GM12878 (cell line): ENCODE measurements at regions of chr14 and their contacts with region 1.

Region 1: DNA sequence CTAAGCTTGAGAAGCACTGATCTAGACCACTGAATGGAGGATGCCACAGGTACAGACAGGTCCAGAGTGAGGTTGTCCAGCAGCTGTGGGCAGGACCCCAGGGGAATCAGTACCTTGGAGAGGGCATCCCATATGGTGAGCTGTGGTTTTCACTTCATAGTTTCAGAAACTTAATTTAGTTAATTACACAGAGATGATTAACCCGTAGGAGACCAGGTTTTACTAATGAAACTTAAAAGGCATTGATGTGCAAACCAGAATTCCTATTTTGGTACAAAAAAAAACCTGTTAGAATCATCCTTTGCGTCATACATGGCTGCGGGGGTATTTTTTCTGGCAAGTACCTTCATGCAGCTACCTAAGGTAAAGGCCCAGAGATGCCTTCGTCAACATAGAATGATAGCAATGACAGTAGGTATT is 159.3 kb downstream of the DACT1 start:
- DNase-seq: peak; percentile 88
- ATAC-seq: peak; percentile 86
- H3K4me3 ChIP-seq: no peak overlapping the region
- H3K27ac ChIP-seq: no peak overlapping the region
- H3K4me1 ChIP-seq: peaks cover 7% of the 10 kb centered on the region; the same call in 1 of the 2 replicates
- H3K27me3 ChIP-seq: no peaks in the 10 kb centered on the region
- CTCF ChIP-seq: no peak
- EP300 ChIP-seq: peak; percentile 99 to 100
- POLR2A ChIP-seq: no peak
- RAD21 ChIP-seq: no peak

Region 2: DNA sequence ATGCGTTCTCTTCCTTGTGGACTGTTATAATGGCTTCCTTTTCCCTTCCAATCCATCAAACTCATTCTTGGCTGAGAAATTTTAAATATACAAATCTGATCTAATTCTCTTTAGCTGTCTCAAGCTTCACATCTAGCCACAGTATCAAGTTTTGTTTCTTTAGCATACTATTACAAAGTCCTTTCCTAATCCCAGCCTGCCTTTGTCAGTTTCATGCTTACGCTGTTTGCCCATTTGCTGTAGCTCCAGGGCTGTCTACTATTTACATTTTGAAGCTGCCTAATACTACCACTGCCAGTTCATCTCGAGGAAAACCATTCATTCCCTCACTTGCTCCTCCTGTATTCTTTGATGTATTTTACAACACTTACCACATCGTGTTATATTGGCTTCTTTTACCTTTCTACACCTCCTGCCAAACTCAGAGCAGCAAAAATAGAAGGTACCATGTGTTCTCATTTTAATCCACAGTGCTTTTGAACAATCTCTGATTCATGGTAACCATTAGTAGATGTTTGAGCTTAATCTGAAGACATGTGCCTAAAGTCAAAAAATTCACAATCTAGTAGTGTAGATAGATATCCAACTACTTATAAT is 455.8 kb before region 1 on chr14:
- CTCF ChIA-PET with region 1: no interaction called
- POLR2A ChIA-PET with region 1: no interaction called
- RAD21 ChIA-PET with region 1: no interaction called
- SMC1A ChIA-PET with region 1: no interaction called
- in situ Hi-C with region 1: no loop called
- intact Hi-C with region 1: no loop called
- DNase-seq: no peak
- ATAC-seq: no peak
- H3K4me3 ChIP-seq: no peak overlapping the region
- H3K27ac ChIP-seq: no peak overlapping the region
- H3K4me1 ChIP-seq: no peaks in the 10 kb centered on the region
- H3K27me3 ChIP-seq: no peaks in the 10 kb centered on the region
- CTCF ChIP-seq: no peak
- EP300 ChIP-seq: no peak
- POLR2A ChIP-seq: no peak
- RAD21 ChIP-seq: no peak

Region 3: GRCh38 chr14:58637391-58638230 is 159.4 kb before region 1 on chr14 and contains the start of gene DACT1:
- CTCF ChIA-PET with region 1: interaction called, 81 read pairs
- POLR2A ChIA-PET with region 1: interaction called, 8 read pairs
- RAD21 ChIA-PET with region 1: interaction called, 106 read pairs
- SMC1A ChIA-PET with region 1: interaction called, 150 read pairs
- in situ Hi-C with region 1: no loop called
- intact Hi-C with region 1: loop called (anchors 1 kb)
- DNase-seq: no peak
- ATAC-seq: peak; percentile 63
- H3K4me3 ChIP-seq: peak within 1 kb of the TSS; percentile 56; the same call in 1 of the 2 replicates
- H3K27ac ChIP-seq: no peak within 1 kb of the TSS
- H3K4me1 ChIP-seq: peaks cover 9% of the 10 kb centered on the region
- H3K27me3 ChIP-seq: peaks cover 0 to 8% of the 10 kb centered on the region in 2 experiments; a peak in 2 of 4 replicates
- CTCF ChIP-seq: no peak
- EP300 ChIP-seq: no peak
- POLR2A ChIP-seq: peak; percentile 49; the same call in 1 of the 2 replicates
- RAD21 ChIP-seq: no peak
- polyA plus RNA-seq, gene DACT1: 0.16 to 0.27 TPM

Region 4: GRCh38 chr14:58749066-58749669 is 47.9 kb before region 1 on chr14:
- CTCF ChIA-PET with region 1: interaction called, 26 read pairs
- POLR2A ChIA-PET with region 1: interaction called, 6 read pairs
- RAD21 ChIA-PET with region 1: interaction called, 15 read pairs
- SMC1A ChIA-PET with region 1: interaction called, 112 read pairs
- in situ Hi-C with region 1: no loop called
- intact Hi-C with region 1: loop called (anchors 1 kb)
- DNase-seq: peak; percentile 86
- ATAC-seq: peak; percentile 95
- H3K4me3 ChIP-seq: no peak overlapping the region
- H3K27ac ChIP-seq: no peak overlapping the region
- H3K4me1 ChIP-seq: no peaks in the 10 kb centered on the region
- H3K27me3 ChIP-seq: no peaks in the 10 kb centered on the region
- CTCF ChIP-seq: no peak
- EP300 ChIP-seq: peak; percentile 91 to 93
- POLR2A ChIP-seq: no peak
- RAD21 ChIP-seq: no peak

Region 5: DNA sequence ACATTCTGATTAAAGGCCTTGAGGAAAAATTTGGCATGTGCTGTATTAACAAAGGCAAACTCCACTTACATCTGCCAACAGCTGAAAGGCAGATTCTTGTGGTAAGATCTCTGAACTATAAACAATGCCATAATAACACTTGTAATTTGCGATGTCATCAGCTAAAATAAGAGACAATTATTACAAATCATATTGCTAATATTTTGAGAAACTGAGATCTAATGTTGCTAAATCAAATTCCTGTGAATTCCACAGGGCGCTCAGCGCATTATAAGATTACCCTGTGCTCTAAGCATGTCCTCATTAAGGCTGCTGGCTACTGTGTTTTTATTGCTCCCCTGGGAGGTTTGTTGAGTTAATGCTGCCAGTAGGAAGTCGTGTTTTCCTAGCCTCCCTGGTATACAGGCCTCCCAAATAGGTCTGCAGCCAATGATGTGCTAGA is 85.6 kb after region 1 on chr14:
- CTCF ChIA-PET with region 1: no interaction called
- POLR2A ChIA-PET with region 1: interaction called, 3 read pairs
- RAD21 ChIA-PET with region 1: no interaction called
- SMC1A ChIA-PET with region 1: interaction called, 4 read pairs
- in situ Hi-C with region 1: no loop called
- intact Hi-C with region 1: loop called (anchors 5 kb)
- DNase-seq: no peak
- ATAC-seq: no peak
- H3K4me3 ChIP-seq: no peak overlapping the region
- H3K27ac ChIP-seq: no peak overlapping the region
- H3K4me1 ChIP-seq: no peaks in the 10 kb centered on the region
- H3K27me3 ChIP-seq: no peaks in the 10 kb centered on the region
- CTCF ChIP-seq: no peak
- EP300 ChIP-seq: no peak
- POLR2A ChIP-seq: no peak
- RAD21 ChIP-seq: no peak

Region 6: DNA sequence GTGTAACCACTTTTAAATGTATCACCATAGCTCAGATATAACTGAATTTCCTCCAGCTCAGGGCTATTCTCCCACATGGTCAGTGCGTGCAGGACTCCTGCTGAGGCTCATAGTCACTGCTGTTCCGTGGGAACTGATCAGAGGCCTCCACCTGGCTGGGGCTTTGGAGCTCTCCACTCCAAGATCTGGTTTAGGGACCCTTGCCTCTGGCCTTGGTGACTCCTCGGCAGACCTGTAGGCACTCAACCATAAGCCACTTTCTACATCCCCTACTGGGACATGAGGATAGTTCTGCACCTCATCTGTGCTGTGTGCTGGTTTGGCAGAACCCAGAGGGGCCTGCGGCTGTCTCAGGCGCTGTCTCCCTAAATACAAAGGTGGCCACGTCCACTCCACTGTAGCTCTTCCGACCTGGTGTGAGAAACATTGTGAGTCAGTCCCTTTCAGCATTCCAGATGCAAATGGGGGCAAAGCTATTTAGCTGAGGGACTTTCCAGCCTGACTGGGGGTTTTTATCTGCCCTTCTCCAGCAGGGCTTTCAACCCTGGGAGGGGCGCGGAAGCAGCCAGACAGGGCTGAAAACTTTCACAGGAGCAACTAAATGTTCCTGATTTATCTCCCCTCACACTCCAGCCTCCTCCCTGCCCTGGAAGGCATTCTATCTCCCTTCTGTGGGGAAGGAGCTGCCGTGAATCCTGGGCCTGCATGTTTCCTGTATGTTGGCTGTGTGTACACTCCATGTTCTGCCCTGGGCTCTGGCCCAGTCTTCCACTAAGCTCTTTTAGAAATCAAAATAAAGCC is 173.1 kb after region 1 on chr14:
- CTCF ChIA-PET with region 1: interaction called, 9 read pairs
- POLR2A ChIA-PET with region 1: interaction called, 4 read pairs
- RAD21 ChIA-PET with region 1: interaction called, 24 read pairs
- SMC1A ChIA-PET with region 1: interaction called, 9 read pairs
- in situ Hi-C with region 1: no loop called
- intact Hi-C with region 1: no loop called
- DNase-seq: peak; percentile 43
- ATAC-seq: peak; percentile 86
- H3K4me3 ChIP-seq: no peak overlapping the region
- H3K27ac ChIP-seq: peak overlapping the region; percentile 43
- H3K4me1 ChIP-seq: peaks cover 4% of the 10 kb centered on the region; the same call in 1 of the 2 replicates
- H3K27me3 ChIP-seq: no peaks in the 10 kb centered on the region
- CTCF ChIP-seq: no peak
- EP300 ChIP-seq: no peak
- POLR2A ChIP-seq: 0 out of 2 replicates have a peak, but pooled peaks have one; percentile 16
- RAD21 ChIP-seq: no peak

Region 7: DNA sequence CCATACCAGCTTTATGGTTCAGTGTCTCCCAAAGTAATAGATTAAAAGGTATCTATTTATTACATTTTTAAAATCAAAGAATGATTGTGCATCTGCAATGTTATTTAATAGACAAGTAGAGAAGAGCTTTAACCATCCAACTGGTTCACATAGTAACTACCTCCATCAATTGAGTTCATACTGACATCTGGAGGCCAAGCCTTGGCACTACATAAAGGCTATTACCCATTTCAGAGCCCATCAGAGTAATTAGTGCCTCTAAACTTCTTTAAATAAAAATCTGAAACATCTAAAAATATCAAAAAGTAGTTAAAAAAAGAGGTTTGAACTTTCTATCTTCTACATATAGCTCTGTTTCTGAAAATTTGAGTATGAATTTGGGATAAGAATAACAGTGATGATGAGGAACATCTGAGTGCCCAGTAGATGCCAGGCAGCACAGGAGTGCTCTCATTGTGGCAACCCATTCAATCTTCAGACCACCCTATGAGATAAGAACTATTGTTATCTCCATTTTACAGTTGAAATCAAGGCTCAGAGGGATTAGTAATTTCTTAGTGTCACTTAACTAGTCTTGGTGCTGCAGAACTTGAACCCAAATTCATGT is 258.5 kb after region 1 on chr14:
- CTCF ChIA-PET with region 1: interaction called, 17 read pairs
- POLR2A ChIA-PET with region 1: no interaction called
- RAD21 ChIA-PET with region 1: interaction called, 21 read pairs
- SMC1A ChIA-PET with region 1: interaction called, 13 read pairs
- in situ Hi-C with region 1: no loop called
- intact Hi-C with region 1: loop called (anchors 2 kb)
- DNase-seq: peak; percentile 7
- ATAC-seq: peak; percentile 97
- H3K4me3 ChIP-seq: no peak overlapping the region
- H3K27ac ChIP-seq: no peak overlapping the region
- H3K4me1 ChIP-seq: no peaks in the 10 kb centered on the region
- H3K27me3 ChIP-seq: no peaks in the 10 kb centered on the region
- CTCF ChIP-seq: peak; percentile 67 to 85 (median 74)
- EP300 ChIP-seq: no peak
- POLR2A ChIP-seq: no peak
- RAD21 ChIP-seq: peak; percentile 90

Region 8: GRCh38 chr14:59529189-59529588 is 732.2 kb after region 1 on chr14:
- CTCF ChIA-PET with region 1: no interaction called
- POLR2A ChIA-PET with region 1: no interaction called
- RAD21 ChIA-PET with region 1: no interaction called
- SMC1A ChIA-PET with region 1: no interaction called
- in situ Hi-C with region 1: no loop called
- intact Hi-C with region 1: no loop called
- DNase-seq: no peak
- ATAC-seq: peak; percentile 60
- H3K4me3 ChIP-seq: no peak overlapping the region
- H3K27ac ChIP-seq: no peak overlapping the region
- H3K4me1 ChIP-seq: no peaks in the 10 kb centered on the region
- H3K27me3 ChIP-seq: no peaks in the 10 kb centered on the region; a peak in 2 of 4 replicates
- CTCF ChIP-seq: no peak
- EP300 ChIP-seq: no peak
- POLR2A ChIP-seq: no peak
- RAD21 ChIP-seq: no peak